ENCODE measurements at regions of chr9 and their contacts with region 1.

Region 1: DNA sequence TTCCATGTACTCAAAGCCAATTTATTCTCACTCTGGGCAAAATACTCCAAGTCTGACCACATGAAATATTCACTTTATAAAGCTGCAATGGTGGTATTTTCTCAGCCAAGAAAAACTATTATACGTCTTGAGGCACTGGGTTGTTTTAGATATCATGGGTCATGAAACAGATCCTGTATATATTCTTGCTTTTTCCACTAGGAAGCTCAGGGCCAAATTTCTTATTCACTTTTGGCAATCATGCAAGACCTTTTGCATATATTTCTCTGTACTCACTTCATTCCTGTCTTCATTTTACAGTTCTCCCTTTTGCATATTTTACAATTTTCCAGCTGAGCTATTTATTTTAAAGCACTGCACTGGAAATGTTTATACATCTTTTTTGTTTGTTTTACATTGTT is 49.8 kb downstream of the GABBR2 start:
- DNase-seq: peak; percentile 87
- ATAC-seq: peak; percentile 70
- H3K4me3 ChIP-seq: no peak overlapping the region
- H3K27ac ChIP-seq: peak overlapping the region; percentile 80; the same call in 1 of the 2 replicates
- H3K4me1 ChIP-seq: peaks cover 18% of the 10 kb centered on the region
- H3K27me3 ChIP-seq: no peaks in the 10 kb centered on the region
- CTCF ChIP-seq: no peak
- POLR2A ChIP-seq: no peak
- RAD21 ChIP-seq: no peak

Region 2: DNA sequence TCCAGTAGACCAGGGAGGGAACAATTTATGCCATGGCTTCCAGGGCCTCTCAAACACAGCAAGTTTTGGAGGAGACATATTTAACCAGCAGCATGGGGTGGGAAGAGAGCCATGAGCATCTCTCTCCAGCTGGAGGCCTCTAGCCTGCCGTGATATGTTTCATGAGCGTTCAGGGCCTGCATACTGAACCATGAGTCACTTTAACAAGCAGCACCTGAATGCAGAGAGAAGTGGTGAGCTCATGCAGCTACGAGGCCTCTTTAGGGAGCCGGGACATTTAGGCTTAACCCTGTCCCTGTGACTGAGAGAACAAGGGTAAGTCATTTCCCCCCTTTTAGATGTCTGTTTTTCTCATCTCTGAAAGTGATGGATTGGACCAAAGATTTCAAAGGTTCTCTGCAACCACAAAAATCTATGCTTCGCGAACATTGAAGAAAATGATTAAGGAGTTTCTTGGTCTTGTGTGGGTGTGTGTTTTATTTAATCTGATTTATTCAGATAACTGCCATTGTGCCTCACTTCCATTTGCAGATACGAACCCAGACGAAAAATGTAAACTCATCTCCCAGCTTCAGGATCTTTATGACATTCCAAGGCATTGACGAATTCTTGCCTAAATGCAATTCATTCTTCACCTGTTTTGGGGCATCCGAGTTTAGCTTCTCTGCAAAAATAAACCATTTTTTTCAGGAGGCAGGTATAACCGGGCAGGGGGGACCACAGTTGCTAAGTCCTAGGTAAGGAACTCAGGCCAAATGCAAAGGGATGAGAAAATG is 107.3 kb before region 1 on chr9:
- CTCF ChIA-PET with region 1: interaction called, 3 read pairs
- POLR2A ChIA-PET with region 1: no interaction called
- dilution Hi-C with region 1: no loop called
- in situ Hi-C with region 1: no loop called
- intact Hi-C with region 1: loop called (anchors 5 kb)
- DNase-seq: peak; percentile 97
- ATAC-seq: peak; percentile 88
- H3K4me3 ChIP-seq: no peak overlapping the region
- H3K27ac ChIP-seq: peak overlapping the region; percentile 47
- H3K4me1 ChIP-seq: peaks cover 24% of the 10 kb centered on the region
- H3K27me3 ChIP-seq: no peaks in the 10 kb centered on the region
- CTCF ChIP-seq: peak; percentile 16; the same call in 1 of the 2 replicates
- POLR2A ChIP-seq: no peak
- RAD21 ChIP-seq: no peak; the same call in 1 of the 2 replicates

Region 3: GRCh38 chr9:98607787-98608186 is 51.2 kb before region 1 on chr9:
- CTCF ChIA-PET with region 1: no interaction called
- POLR2A ChIA-PET with region 1: no interaction called
- dilution Hi-C with region 1: no loop called
- in situ Hi-C with region 1: no loop called
- intact Hi-C with region 1: loop called (anchors 2 kb)
- DNase-seq: peak; percentile 97
- ATAC-seq: peak; percentile 55
- H3K4me3 ChIP-seq: no peak overlapping the region
- H3K27ac ChIP-seq: peak overlapping the region; percentile 74
- H3K4me1 ChIP-seq: peaks cover 51% of the 10 kb centered on the region
- H3K27me3 ChIP-seq: no peaks in the 10 kb centered on the region
- CTCF ChIP-seq: no peak
- POLR2A ChIP-seq: peak; percentile 33; the same call in 1 of the 2 replicates
- RAD21 ChIP-seq: no peak; the same call in 1 of the 2 replicates

Region 4: GRCh38 chr9:98686961-98687855 is 28.3 kb after region 1 on chr9:
- CTCF ChIA-PET with region 1: no interaction called
- POLR2A ChIA-PET with region 1: no interaction called
- dilution Hi-C with region 1: no loop called
- in situ Hi-C with region 1: no loop called
- intact Hi-C with region 1: no loop called
- DNase-seq: no peak
- ATAC-seq: no peak
- H3K4me3 ChIP-seq: no peak overlapping the region
- H3K27ac ChIP-seq: no peak overlapping the region
- H3K4me1 ChIP-seq: peaks cover 6% of the 10 kb centered on the region
- H3K27me3 ChIP-seq: no peaks in the 10 kb centered on the region; the same call in 1 of the 2 replicates
- CTCF ChIP-seq: no peak
- POLR2A ChIP-seq: no peak
- RAD21 ChIP-seq: no peak

Region 5: DNA sequence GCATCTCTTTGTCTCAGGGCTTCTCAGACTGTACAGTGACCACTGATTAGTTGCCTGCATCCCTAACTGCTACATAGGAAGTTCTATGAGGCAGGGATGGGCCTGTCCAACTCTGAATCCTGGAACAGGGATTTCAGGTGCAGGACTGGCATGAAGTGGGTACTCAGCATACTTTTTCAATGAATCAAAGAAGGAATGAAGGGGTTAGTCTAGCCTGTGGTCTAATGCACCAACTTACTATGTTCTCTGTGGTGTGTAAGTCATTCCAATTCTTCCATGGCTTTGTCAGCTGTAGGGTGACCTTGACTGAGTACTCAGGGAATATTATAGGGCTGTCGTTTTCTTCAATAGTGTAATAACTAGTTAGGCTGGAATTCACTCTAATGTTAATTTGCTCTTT is 293.0 kb after region 1 on chr9:
- CTCF ChIA-PET with region 1: no interaction called
- POLR2A ChIA-PET with region 1: no interaction called
- dilution Hi-C with region 1: no loop called
- in situ Hi-C with region 1: no loop called
- intact Hi-C with region 1: no loop called
- DNase-seq: no peak
- ATAC-seq: no peak
- H3K4me3 ChIP-seq: no peak overlapping the region
- H3K27ac ChIP-seq: no peak overlapping the region
- H3K4me1 ChIP-seq: no peaks in the 10 kb centered on the region; the same call in 1 of the 2 replicates
- H3K27me3 ChIP-seq: no peaks in the 10 kb centered on the region
- CTCF ChIP-seq: no peak
- POLR2A ChIP-seq: no peak
- RAD21 ChIP-seq: no peak

Measured in IMR-90 (cell line).